ENCODE measurements at regions of chr1 and their contacts with region 1.

Region 1: DNA sequence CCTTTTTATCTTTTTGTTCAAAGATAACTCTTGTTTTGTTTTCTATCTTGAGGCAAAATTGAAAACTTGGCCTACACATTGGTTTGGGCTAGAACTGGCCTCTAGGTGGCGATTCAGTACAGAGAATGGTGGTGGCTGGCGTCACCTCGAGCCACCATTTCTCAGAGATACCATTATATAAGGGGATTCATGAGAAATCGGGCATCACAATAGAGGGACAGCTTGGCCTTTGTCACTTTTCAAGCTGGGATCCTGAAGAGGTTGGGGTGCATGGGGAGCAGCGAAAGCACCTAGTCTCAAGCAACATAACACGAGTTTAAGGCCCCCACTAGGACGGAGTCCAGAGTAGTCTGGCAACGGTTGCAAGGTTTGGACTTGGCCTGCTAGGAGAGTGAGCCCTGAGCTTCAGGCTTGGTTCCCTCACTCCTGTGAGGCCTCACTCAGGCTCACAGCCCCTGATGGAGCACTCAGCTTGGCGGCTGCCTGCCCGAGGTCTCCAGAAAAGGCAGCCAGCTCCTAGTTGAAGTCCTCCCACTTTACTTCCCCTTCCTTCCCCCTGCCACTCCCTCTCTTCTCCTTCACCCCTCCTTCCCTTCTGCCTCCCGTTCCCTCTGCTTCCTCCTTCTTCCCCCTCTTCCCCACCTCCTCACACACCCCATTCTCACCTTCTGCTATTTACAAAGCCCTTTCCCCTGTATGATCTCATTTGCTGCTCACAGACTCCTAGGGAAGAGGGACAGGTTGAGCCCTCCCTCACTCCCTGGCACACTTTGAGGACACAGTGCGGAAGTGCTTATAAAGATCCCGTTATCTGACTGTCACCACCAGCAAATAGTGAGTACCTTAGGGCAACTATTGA is 67.8 kb downstream of the LRIG2 start:
- DNase-seq: peak; percentile 51 to 62
- H3K4me3 ChIP-seq: no peak overlapping the region
- H3K4me3 Mint-ChIP-seq: no peak overlapping the region
- H3K27ac Mint-ChIP-seq: peak overlapping the region; percentile 68
- H3K4me1 ChIP-seq: peaks cover 15% of the 10 kb centered on the region
- H3K4me1 Mint-ChIP-seq: peaks cover 13% of the 10 kb centered on the region
- H3K27me3 ChIP-seq: no peaks in the 10 kb centered on the region
- H3K27me3 Mint-ChIP-seq: no peaks in the 10 kb centered on the region
- CTCF ChIP-seq: peak; percentile 64 to 76

Region 2: DNA sequence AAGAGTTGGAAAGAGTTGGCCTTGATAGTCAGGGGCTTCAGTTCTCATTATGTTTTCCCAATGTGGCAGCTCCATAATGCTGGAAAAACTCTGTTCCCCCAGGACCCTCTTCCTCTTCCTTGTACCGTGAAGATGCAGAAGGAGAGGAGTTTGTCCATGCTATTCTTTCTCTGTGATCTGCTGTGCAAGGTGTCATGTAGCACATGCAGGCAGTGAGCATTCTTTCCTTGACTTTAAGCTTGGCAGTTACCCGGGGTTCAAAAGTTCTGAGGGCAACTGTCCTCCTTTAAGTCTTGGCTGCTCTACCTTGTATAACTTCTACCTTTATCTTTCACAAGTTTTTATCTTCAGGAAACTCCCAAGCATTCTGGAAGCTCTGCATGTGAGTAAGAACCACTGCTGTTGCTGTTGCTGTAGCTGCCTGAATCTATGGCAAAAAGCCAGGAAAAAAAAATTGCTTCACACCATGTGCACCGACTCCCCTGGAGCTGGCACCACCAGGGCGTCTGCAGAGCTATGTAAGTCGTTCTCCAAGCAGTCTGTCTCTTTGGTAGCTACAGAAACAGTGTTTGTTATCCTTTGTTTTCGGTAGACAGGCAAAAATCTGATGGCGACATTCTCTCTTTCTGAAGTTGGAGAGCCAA is 142.1 kb before region 1 on chr1:
- CTCF ChIA-PET with region 1: no interaction called
- POLR2A ChIA-PET with region 1: no interaction called
- intact Hi-C with region 1: no loop called
- DNase-seq: no peak
- H3K4me3 ChIP-seq: no peak overlapping the region
- H3K4me3 Mint-ChIP-seq: no peak overlapping the region
- H3K27ac Mint-ChIP-seq: no peak overlapping the region
- H3K4me1 ChIP-seq: no peaks in the 10 kb centered on the region
- H3K4me1 Mint-ChIP-seq: no peaks in the 10 kb centered on the region
- H3K27me3 ChIP-seq: no peaks in the 10 kb centered on the region
- H3K27me3 Mint-ChIP-seq: no peaks in the 10 kb centered on the region
- CTCF ChIP-seq: no peak

Region 3: GRCh38 chr1:113123737-113124136 is 17.1 kb before region 1 on chr1:
- CTCF ChIA-PET with region 1: no interaction called
- POLR2A ChIA-PET with region 1: no interaction called
- intact Hi-C with region 1: no loop called
- DNase-seq: no peak
- H3K4me3 ChIP-seq: no peak overlapping the region
- H3K4me3 Mint-ChIP-seq: no peak overlapping the region
- H3K27ac Mint-ChIP-seq: no peak overlapping the region
- H3K4me1 ChIP-seq: no peaks in the 10 kb centered on the region
- H3K4me1 Mint-ChIP-seq: no peaks in the 10 kb centered on the region
- H3K27me3 ChIP-seq: no peaks in the 10 kb centered on the region
- H3K27me3 Mint-ChIP-seq: no peaks in the 10 kb centered on the region
- CTCF ChIP-seq: no peak

Region 4: GRCh38 chr1:113166473-113166872 is 25.7 kb after region 1 on chr1:
- CTCF ChIA-PET with region 1: no interaction called
- POLR2A ChIA-PET with region 1: no interaction called
- intact Hi-C with region 1: no loop called
- DNase-seq: no peak
- H3K4me3 ChIP-seq: no peak overlapping the region
- H3K4me3 Mint-ChIP-seq: no peak overlapping the region
- H3K27ac Mint-ChIP-seq: no peak overlapping the region
- H3K4me1 ChIP-seq: no peaks in the 10 kb centered on the region
- H3K4me1 Mint-ChIP-seq: no peaks in the 10 kb centered on the region
- H3K27me3 ChIP-seq: no peaks in the 10 kb centered on the region
- H3K27me3 Mint-ChIP-seq: no peaks in the 10 kb centered on the region
- CTCF ChIP-seq: no peak

Region 5: GRCh38 chr1:113242481-113242880 is 101.7 kb after region 1 on chr1:
- CTCF ChIA-PET with region 1: no interaction called
- POLR2A ChIA-PET with region 1: no interaction called
- intact Hi-C with region 1: loop called (anchors 1 kb)
- DNase-seq: peak; percentile 7 to 43
- H3K4me3 ChIP-seq: no peak overlapping the region
- H3K4me3 Mint-ChIP-seq: no peak overlapping the region
- H3K27ac Mint-ChIP-seq: no peak overlapping the region
- H3K4me1 ChIP-seq: peaks cover 26% of the 10 kb centered on the region
- H3K4me1 Mint-ChIP-seq: peaks cover 23% of the 10 kb centered on the region
- H3K27me3 ChIP-seq: no peaks in the 10 kb centered on the region
- H3K27me3 Mint-ChIP-seq: no peaks in the 10 kb centered on the region
- CTCF ChIP-seq: no peak

Region 6: DNA sequence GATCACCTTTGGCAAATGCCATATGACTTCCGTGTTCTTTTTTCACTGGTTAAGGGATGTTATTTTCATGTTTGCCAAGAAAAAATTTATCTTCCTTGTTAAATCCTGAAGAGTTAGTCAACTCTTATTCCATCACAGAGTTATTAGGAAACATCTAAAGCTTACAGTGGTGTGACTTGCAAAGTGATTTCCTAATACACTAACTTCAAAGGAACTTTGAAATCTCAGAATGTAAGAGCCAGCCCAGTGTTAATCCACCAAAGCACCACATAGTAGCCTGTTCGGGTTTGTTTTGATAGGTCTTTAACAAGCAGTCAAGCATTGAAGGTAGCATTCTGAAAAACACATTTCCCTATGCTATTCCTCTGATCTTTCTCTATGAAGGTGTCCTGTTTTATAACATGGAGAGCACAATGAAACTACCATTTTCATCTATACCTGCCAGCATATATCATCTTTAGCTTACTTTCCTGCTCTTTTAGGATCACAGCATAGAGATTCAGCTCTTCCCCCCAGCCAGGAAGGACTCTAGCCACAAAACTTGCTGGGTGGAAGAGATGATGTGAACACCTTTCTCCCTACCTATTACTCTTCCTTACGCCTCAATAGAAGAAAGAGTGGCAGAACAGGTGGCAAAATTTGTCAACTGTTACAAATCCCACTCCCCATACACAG is 167.1 kb after region 1 on chr1:
- CTCF ChIA-PET with region 1: no interaction called
- POLR2A ChIA-PET with region 1: no interaction called
- intact Hi-C with region 1: loop called (anchors 10 kb)
- DNase-seq: peak in 1 of 2 experiments; percentile 57
- H3K4me3 ChIP-seq: no peak overlapping the region
- H3K4me3 Mint-ChIP-seq: peak overlapping the region; percentile 59
- H3K27ac Mint-ChIP-seq: peak overlapping the region; percentile 84
- H3K4me1 ChIP-seq: peaks cover 23% of the 10 kb centered on the region
- H3K4me1 Mint-ChIP-seq: peaks cover 40% of the 10 kb centered on the region
- H3K27me3 ChIP-seq: no peaks in the 10 kb centered on the region
- H3K27me3 Mint-ChIP-seq: no peaks in the 10 kb centered on the region
- CTCF ChIP-seq: no peak

Region 7: GRCh38 chr1:113452921-113453770 is 312.3 kb after region 1 on chr1:
- CTCF ChIA-PET with region 1: interaction called, 5 read pairs
- POLR2A ChIA-PET with region 1: no interaction called
- intact Hi-C with region 1: loop called (anchors 1 kb)
- DNase-seq: peak; percentile 4 to 29
- H3K4me3 ChIP-seq: no peak overlapping the region
- H3K4me3 Mint-ChIP-seq: no peak overlapping the region
- H3K27ac Mint-ChIP-seq: no peak overlapping the region
- H3K4me1 ChIP-seq: peaks cover 8% of the 10 kb centered on the region
- H3K4me1 Mint-ChIP-seq: peaks cover 30% of the 10 kb centered on the region
- H3K27me3 ChIP-seq: no peaks in the 10 kb centered on the region
- H3K27me3 Mint-ChIP-seq: no peaks in the 10 kb centered on the region
- CTCF ChIP-seq: peak; percentile 25 to 39

Region 8: GRCh38 chr1:113677250-113678158 is 536.7 kb after region 1 on chr1:
- CTCF ChIA-PET with region 1: interaction called, 5 read pairs
- POLR2A ChIA-PET with region 1: no interaction called
- intact Hi-C with region 1: loop called (anchors 2 kb)
- DNase-seq: peak in 1 of 2 experiments; percentile 39
- H3K4me3 ChIP-seq: no peak overlapping the region
- H3K4me3 Mint-ChIP-seq: no peak overlapping the region
- H3K27ac Mint-ChIP-seq: no peak overlapping the region
- H3K4me1 ChIP-seq: 0 out of 2 replicates have a peak, but pooled peaks cover 10% of the 10 kb centered on the region
- H3K4me1 Mint-ChIP-seq: peaks cover 23% of the 10 kb centered on the region
- H3K27me3 ChIP-seq: no peaks in the 10 kb centered on the region
- H3K27me3 Mint-ChIP-seq: no peaks in the 10 kb centered on the region
- CTCF ChIP-seq: peak; percentile 26 to 28